ENCODE measurements at regions of chr6 and their contacts with region 1.

Region 1: GRCh38 chr6:166382933-166383801 is at the start of gene MPC1:
- DNase-seq: peak; percentile 94
- ATAC-seq: peak; percentile 90
- H3K4me3 ChIP-seq: peak within 1 kb of the TSS; percentile 98 to 100 (median 99)
- H3K27ac ChIP-seq: peak within 1 kb of the TSS; percentile 93
- H3K4me1 ChIP-seq: peaks cover 69% of the 10 kb centered on the region
- H3K27me3 ChIP-seq: no peaks in the 10 kb centered on the region; a peak in 1 of 5 replicates
- CTCF ChIP-seq: peak; percentile 16
- EP300 ChIP-seq: 0 out of 4 replicates have a peak, but pooled peaks of 1 of the 2 experiments have one; percentile 9
- POLR2A ChIP-seq: peak in 1 of 2 experiments; percentile 81; a peak in 2 of 4 replicates
- RAD21 ChIP-seq: peak; percentile 65
- total RNA-seq, gene MPC1: 214 and 289 TPM in 2 replicates

Region 2: DNA sequence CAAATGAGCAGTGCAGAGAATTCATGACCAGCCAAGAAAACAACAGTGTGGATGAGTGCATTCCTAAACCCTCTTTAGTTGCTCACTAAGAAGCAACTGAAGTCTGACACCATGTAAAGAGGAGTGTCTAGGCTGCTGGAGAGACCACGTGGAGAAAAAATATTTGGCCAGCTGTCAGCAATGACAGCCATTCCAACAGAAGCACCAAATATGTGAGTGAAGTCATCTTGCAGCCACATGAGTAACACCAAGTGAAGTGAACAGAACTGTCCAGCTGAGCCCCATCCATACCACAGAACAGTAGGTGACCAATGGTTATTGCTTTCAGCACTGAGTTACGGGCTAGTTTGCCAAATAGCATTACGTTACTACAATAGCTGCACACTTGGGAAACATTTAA is 304.9 kb before region 1 on chr6:
- CTCF ChIA-PET with region 1: no interaction called
- POLR2A ChIA-PET with region 1: no interaction called
- in situ Hi-C with region 1: no loop called
- intact Hi-C with region 1: no loop called
- DNase-seq: no peak
- ATAC-seq: no peak
- H3K4me3 ChIP-seq: no peak overlapping the region
- H3K27ac ChIP-seq: no peak overlapping the region
- H3K4me1 ChIP-seq: no peaks in the 10 kb centered on the region
- H3K27me3 ChIP-seq: peaks cover 0 to 11% of the 10 kb centered on the region in 2 experiments; a peak in 1 of 5 replicates
- CTCF ChIP-seq: no peak
- EP300 ChIP-seq: no peak
- POLR2A ChIP-seq: no peak
- RAD21 ChIP-seq: no peak

Region 3: DNA sequence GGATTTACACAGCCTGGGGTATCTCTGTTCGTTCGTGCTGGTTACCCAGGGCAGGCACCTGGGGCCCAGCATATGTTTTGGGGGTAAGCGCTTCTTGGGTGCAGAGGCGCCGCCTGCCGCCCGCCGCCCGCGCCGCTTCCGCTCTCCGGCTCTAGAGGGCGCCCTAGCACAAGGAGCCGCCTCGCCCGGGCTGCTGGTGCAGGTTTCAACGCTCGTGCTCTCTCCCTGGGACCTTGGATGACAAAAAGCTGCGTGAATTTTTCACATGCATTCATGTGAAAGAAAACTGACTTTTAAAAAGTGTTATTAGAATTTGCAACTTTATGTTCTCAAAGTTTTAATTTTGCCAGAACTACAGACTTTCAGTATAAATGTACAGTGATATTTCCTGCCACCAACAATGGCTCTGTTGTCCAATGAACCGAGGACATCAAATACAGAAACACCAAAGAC is 107.4 kb before region 1 on chr6:
- CTCF ChIA-PET with region 1: interaction called, 17 read pairs
- POLR2A ChIA-PET with region 1: interaction called, 3 read pairs
- in situ Hi-C with region 1: no loop called
- intact Hi-C with region 1: loop called (anchors 5 kb)
- DNase-seq: peak; percentile 30
- ATAC-seq: peak; percentile 91
- H3K4me3 ChIP-seq: no peak overlapping the region
- H3K27ac ChIP-seq: no peak overlapping the region
- H3K4me1 ChIP-seq: peaks cover 7% of the 10 kb centered on the region; the same call in 1 of the 2 replicates
- H3K27me3 ChIP-seq: peaks cover 9 to 24% of the 10 kb centered on the region in 2 experiments
- CTCF ChIP-seq: peak; percentile 98
- EP300 ChIP-seq: no peak
- POLR2A ChIP-seq: no peak
- RAD21 ChIP-seq: peak; percentile 98

Region 4: DNA sequence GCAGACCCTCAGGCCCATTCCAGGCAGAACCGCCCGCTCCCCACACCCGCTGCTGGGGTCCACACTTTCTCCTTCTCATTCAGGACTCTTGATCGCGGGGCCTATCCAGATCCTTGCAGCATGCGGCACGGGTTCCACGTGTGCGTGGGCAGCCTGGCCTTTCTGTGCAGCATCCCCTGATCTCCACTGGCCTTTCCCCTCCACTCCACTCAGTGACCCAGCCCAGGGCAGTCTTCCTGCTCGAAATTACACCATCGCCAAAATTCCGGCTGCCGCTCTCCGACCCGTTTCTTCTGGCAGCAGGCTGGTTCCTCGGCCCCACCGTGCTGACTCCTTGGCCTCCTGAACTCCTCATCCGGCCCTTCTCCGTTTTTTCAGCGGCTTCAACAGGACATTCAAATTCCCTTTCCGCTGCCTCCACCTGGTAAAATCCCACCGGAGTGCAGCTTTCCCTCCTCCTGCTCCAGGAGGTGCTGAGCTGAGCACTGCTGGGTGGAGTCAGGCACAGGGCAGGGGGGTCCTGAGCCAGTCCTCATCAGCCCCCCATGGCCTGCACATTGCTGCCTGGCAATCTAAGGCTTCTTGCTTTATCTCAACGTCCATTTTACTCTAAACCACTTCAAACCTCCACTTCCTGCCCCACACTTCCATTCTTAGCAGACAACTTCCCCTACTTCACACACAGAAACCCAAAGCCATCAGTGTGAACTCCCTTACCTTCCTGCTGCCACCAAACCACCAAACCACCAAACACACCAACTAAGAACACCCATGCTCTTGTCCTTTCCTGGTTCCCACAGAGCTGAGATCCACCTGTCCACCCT is 49.8 kb before region 1 on chr6:
- CTCF ChIA-PET with region 1: interaction called, 17 read pairs
- POLR2A ChIA-PET with region 1: interaction called, 6 read pairs
- in situ Hi-C with region 1: no loop called
- intact Hi-C with region 1: loop called (anchors 1 kb)
- DNase-seq: no peak
- ATAC-seq: no peak
- H3K4me3 ChIP-seq: no peak overlapping the region
- H3K27ac ChIP-seq: no peak overlapping the region
- H3K4me1 ChIP-seq: peaks cover 36% of the 10 kb centered on the region
- H3K27me3 ChIP-seq: no peaks in the 10 kb centered on the region
- CTCF ChIP-seq: no peak
- EP300 ChIP-seq: no peak
- POLR2A ChIP-seq: no peak
- RAD21 ChIP-seq: no peak

Region 5: GRCh38 chr6:166360243-166361076 is 22.7 kb before region 1 on chr6:
- CTCF ChIA-PET with region 1: no interaction called
- POLR2A ChIA-PET with region 1: interaction called, 48 read pairs
- in situ Hi-C with region 1: no loop called
- intact Hi-C with region 1: loop called (anchors 1 kb)
- DNase-seq: no peak
- ATAC-seq: peak; percentile 76
- H3K4me3 ChIP-seq: peak overlapping the region; percentile 6 to 59 (median 32); a peak in 4 of 6 replicates
- H3K27ac ChIP-seq: peak overlapping the region; percentile 86
- H3K4me1 ChIP-seq: peaks cover 32% of the 10 kb centered on the region
- H3K27me3 ChIP-seq: no peaks in the 10 kb centered on the region
- CTCF ChIP-seq: no peak
- EP300 ChIP-seq: no peak
- POLR2A ChIP-seq: peak in 1 of 2 experiments; percentile 0; a peak in 1 of 4 replicates
- RAD21 ChIP-seq: no peak

Region 6: DNA sequence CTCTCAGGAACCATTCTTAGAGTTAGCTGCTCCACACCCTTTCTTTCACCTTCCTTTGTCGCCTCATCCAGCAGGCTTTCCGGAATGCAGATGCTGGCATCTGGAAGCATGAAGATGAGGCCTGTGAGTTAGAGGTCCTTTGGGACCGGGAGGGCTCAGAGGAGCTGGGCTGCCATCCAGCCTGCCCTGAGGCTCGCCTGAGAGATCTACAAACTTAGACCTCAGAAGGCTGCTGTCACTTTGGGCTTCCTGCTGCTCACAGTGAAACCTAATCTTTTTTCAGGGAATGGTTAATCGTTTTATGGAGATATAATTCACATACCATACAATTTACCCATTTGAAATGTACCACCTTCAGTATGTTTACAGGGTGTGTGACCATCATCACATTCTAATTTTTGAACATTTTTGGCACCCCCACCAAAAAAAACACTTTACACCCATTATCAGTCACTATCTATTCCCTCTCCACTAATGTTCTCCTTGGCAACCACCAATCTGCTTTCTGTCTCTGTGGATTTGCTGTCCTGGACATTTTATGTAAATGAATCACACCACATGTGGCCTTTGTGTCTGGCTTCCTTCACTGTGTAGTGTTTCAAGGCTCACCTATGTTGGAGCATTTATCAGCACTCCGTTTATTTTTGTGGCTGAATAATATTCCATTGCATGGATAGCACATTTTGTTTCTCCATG is 19.6 kb after region 1 on chr6:
- CTCF ChIA-PET with region 1: interaction called, 20 read pairs
- POLR2A ChIA-PET with region 1: interaction called, 36 read pairs
- in situ Hi-C with region 1: no loop called
- intact Hi-C with region 1: loop called (anchors 2 kb)
- DNase-seq: no peak
- ATAC-seq: no peak
- H3K4me3 ChIP-seq: no peak overlapping the region
- H3K27ac ChIP-seq: no peak overlapping the region
- H3K4me1 ChIP-seq: peaks cover 52% of the 10 kb centered on the region
- H3K27me3 ChIP-seq: peaks cover 3 to 38% of the 10 kb centered on the region in 2 experiments
- CTCF ChIP-seq: no peak
- EP300 ChIP-seq: no peak
- POLR2A ChIP-seq: no peak
- RAD21 ChIP-seq: no peak

Measured in HepG2 (cell line).